Left ventricle myocardium inferior (tissue), 1 donor: ENCODE measurements at regions of chr2 and their contacts with region 1.

Region 1: DNA sequence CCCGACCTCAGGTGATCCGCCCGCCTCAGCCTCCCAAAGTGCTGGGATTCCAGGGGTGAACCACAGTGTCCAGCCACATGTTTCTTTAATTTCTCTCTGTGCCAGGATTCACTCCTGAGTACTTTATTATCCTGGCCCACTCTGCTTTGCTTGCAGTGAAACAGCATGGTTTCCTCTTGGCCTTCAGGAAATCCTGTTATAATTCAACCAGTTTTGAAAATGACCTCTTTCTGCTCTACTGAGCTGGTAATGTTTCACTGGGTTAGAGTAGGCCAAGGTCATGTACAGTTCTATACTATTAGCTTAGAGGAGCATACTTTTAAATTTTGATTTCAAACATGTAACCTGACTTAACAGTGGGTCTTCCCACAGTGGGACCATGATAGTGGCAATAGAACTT is 90.6 kb upstream of the PELI1 start:
- DNase-seq: no peak
- H3K4me3 ChIP-seq: no peak overlapping the region
- H3K27ac ChIP-seq: peak overlapping the region; percentile 27
- H3K4me1 ChIP-seq: peaks cover 23% of the 10 kb centered on the region
- H3K27me3 ChIP-seq: no peaks in the 10 kb centered on the region
- CTCF ChIP-seq: no peak

Region 2: DNA sequence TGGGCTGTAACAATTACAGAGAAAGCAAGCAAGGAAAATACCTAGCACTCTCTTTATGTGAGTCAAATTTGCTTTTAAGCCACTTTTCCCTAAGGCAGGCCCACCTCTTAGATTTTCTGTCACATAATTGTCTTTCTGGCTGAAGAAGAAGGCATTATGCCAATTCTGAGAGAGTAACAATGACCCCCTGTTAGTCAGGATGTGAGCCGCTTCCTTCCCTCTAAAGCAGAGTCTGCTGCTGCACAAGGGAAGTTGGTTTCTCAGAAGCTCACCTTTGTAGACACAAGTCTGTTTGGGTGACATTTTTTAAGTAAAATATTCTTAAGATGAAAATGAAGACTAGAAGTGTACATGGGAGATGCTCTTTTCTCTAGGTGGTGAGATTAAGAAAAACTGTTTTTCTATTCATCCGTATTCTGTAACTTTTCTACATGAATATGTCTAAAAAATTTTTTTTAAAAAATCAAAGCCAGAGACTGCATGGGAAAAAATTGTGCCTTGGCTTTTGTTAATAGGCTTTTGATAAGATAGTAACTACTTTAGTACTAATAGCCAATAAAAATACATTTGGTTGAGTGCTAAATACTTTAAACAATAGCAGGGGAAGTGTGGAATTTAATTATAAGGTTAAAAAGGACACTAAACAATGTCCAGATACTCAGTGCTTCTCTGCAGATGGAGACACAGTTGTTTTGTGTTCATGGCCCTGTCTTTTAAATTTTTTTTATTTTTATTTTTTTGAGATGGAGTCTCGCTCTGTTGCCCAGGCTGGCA is 182.1 kb before region 1 on chr2:
- intact Hi-C with region 1: loop called (anchors 10 kb)
- DNase-seq: no peak
- H3K4me3 ChIP-seq: no peak overlapping the region
- H3K27ac ChIP-seq: peak overlapping the region; percentile 78
- H3K4me1 ChIP-seq: peaks cover 14% of the 10 kb centered on the region
- H3K27me3 ChIP-seq: peaks cover 3% of the 10 kb centered on the region
- CTCF ChIP-seq: no peak